Lower leg skin (tissue), 4 donors: ENCODE measurements at regions of chr1 and their contacts with region 1.

Region 1: DNA sequence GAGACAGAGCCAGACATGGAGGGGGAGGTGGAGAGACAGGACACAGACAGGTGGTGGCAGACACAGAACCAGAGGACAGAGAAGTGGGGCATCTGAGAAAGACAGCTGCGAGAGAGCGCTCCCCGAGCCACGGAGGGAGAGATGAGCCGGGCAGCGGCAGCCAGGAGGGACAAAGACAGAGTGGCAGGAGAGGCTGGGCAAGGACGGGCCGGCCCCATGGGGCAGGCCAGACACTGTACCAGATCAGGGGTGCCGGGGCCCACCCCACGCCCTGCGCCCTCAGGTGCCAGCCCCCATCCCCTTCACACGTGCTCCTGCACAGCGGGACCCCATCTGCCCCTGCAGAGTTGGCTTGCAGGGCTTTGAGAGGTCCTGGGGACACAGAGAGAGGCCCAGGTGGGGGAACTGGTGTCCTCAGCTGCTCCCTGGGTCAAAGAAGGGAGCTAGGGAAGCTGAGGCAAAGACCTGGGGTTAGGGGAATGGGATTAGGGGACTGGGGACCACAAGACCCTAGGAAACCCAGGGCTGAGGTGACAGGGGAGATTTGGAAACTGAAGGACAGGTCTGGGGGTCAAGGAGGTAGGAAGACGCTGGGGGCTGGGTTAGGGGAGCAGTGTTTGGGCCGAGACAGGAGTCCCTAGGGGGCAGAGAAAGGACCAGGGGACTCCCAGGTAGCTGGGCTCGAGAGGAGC is 643 bp downstream of the FNDC5 start:
- DNase-seq: peak in 1 of 2 donors; percentile 83
- H3K4me3 ChIP-seq: no peak overlapping the region
- CTCF ChIP-seq: no peak
- POLR2A ChIP-seq: no peak

Region 2: GRCh38 chr1:32702599-32703478 is 167.2 kb before region 1 on chr1 and contains the start of gene SYNC:
- intact Hi-C with region 1: loop called (anchors 10 kb)
- DNase-seq: peak; percentile 52 to 94
- H3K4me3 ChIP-seq: peak within 1 kb of the TSS; percentile 31
- CTCF ChIP-seq: no peak
- POLR2A ChIP-seq: no peak
- total RNA-seq, gene SYNC: 2.8 to 16.9 (median 5.8) TPM